ENCODE measurements at regions of chr14 and their contacts with region 1.

Region 1: GRCh38 chr14:69247676-69248440 is 12.1 kb upstream of the GALNT16 start:
- DNase-seq: no peak
- H3K4me3 ChIP-seq: no peak overlapping the region
- H3K27ac ChIP-seq: no peak overlapping the region
- H3K4me1 ChIP-seq: no peaks in the 10 kb centered on the region
- H3K27me3 ChIP-seq: no peaks in the 10 kb centered on the region
- CTCF ChIP-seq: no peak

Region 2: GRCh38 chr14:69129264-69129880 is 118.5 kb before region 1 on chr14:
- intact Hi-C with region 1: loop called (anchors 5 kb)
- DNase-seq: peak; percentile 72
- H3K4me3 ChIP-seq: no peak overlapping the region
- H3K27ac ChIP-seq: no peak overlapping the region
- H3K4me1 ChIP-seq: no peaks in the 10 kb centered on the region
- H3K27me3 ChIP-seq: no peaks in the 10 kb centered on the region
- CTCF ChIP-seq: peak; percentile 87

Region 3: DNA sequence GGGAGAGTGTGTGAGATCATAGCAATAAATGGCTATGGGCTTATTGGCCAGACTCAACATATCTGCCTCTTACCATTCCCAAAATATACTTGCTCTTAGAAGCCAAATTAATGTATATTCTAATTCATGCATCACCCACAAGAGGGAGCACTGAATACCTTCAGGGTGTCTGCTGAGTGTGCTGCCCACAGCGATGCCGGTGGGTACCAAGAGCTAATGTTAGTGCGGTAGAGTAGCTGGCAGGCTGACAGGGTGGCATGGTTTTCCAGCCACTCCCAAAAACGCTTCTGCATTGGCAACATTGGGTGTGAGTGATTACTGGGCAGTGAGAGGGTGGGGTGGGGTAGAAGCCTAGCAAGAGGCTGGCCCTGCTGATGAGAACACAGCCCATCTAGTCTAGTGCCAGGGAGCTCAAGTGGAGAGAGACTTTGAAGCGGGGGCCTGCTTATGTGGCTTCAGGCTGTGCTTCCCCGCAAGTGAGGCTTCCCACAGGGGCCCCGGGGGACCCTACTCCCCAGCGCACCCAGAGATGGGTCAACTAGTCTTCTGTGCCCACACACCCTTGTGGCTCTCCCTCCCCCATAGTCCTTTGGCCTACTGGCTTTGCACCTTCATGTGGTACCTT is 227.4 kb after region 1 on chr14:
- intact Hi-C with region 1: no loop called
- DNase-seq: no peak
- H3K4me3 ChIP-seq: no peak overlapping the region
- H3K27ac ChIP-seq: no peak overlapping the region
- H3K4me1 ChIP-seq: no peaks in the 10 kb centered on the region
- H3K27me3 ChIP-seq: no peaks in the 10 kb centered on the region
- CTCF ChIP-seq: peak; percentile 22